CD4-positive, alpha-beta memory T cell (primary cell): ENCODE measurements at regions of chr11 and their contacts with region 1.

Region 1: DNA sequence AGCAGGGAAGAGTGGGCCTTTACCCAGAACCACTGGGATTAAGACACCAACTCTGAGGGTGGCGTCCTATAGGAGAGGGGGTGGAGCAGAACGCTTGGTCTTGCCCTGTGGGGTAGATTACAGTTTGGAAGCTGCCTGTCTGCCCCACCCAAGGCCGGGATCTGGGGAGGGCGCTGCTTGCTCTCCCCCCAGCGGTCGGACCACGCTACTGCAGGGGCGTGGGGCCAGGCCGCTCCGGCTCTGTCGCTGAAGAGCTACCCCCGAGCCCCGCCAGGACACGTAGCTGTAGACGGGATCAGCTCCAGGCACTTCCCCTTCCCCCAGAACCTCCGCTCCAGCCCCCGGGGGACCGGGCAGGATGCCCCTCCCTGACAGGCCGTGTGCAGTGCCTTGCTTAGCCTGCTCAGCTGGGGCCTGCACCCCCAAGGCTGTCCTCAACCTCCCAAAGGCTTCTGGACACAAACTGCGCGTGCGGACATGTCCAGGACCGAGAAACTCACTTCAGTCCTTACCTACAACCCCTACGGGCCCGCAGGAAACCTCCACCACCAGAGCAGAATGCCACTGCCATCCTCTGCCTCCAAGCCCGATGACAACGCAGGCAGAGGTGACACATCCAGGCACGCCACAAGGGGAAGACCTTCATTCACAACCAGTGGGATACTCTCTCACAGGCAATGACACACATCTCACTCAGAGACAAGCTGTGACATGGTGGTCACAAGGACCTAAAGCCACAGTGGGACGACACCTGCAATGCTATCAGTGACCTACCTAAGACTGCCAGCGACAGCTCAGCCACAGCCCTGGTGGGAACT is 3.6 kb downstream of the AHNAK start:
- DNase-seq: peak; percentile 71 to 92 (median 71)
- H3K4me3 ChIP-seq: peak overlapping the region; percentile 91 to 94
- H3K4me3 Mint-ChIP-seq: peak overlapping the region; percentile 97 to 99 (median 98)
- H3K27ac ChIP-seq: peak overlapping the region; percentile 97
- H3K27ac Mint-ChIP-seq: peak overlapping the region; percentile 94 to 99 (median 98)
- H3K4me1 ChIP-seq: peaks cover 77% of the 10 kb centered on the region
- H3K4me1 Mint-ChIP-seq: peaks cover 48 to 88% (median 63%) of the 10 kb centered on the region in 4 donors
- H3K27me3 ChIP-seq: no peaks in the 10 kb centered on the region
- H3K27me3 Mint-ChIP-seq: no peaks in the 10 kb centered on the region

Region 2: GRCh38 chr11:62372871-62373270 is 170.1 kb before region 1 on chr11:
- CTCF ChIA-PET with region 1: no interaction called
- POLR2A ChIA-PET with region 1: no interaction called
- intact Hi-C with region 1: no loop called
- DNase-seq: no peak
- H3K4me3 ChIP-seq: no peak overlapping the region
- H3K4me3 Mint-ChIP-seq: no peak overlapping the region
- H3K27ac ChIP-seq: no peak overlapping the region
- H3K27ac Mint-ChIP-seq: peak overlapping the region in 2 of 7 donors; percentile 16 to 21
- H3K4me1 ChIP-seq: peaks cover 4% of the 10 kb centered on the region
- H3K4me1 Mint-ChIP-seq: peaks cover 0 to 37% (median 13%) of the 10 kb centered on the region in 4 donors
- H3K27me3 ChIP-seq: no peaks in the 10 kb centered on the region
- H3K27me3 Mint-ChIP-seq: no peaks in the 10 kb centered on the region

Region 3: DNA sequence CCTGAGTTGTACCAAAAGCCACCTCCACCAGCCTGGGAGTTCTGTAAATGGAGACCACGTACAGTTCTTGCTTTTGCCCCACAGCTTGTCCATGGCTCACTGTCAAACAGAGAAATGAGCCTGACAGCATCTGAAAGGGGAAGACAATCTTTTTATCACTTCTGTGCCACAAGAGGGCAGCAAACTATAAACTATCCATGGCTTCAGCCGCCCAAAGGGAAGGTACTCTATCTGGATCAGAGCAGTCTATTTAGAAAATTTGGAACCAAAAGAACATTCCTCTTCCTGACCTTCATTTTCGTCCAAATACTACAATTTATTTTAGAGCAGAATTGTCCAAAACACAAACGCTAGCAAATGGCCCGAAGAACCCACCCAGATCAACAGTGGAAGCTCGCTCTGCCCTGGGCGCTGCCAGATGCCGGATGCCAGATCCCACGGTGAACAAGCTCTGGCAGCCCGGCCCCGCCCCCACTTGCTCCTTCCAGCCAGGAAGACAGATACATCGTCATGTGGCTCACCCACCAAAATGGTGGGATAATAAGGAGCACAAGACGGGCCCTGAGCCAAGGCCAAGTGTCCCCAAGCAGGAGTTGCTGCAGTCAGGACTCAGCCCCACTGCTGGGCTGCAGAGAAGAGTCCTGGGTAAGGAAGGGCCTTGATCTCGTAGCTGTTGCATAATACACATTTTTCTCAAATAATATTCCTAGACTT is 148.0 kb before region 1 on chr11:
- CTCF ChIA-PET with region 1: interaction called, 35 read pairs
- POLR2A ChIA-PET with region 1: interaction called, 3 read pairs
- intact Hi-C with region 1: loop called (anchors 1 kb)
- DNase-seq: peak; percentile 56 to 63 (median 59)
- H3K4me3 ChIP-seq: no peak overlapping the region
- H3K4me3 Mint-ChIP-seq: no peak overlapping the region
- H3K27ac ChIP-seq: no peak overlapping the region
- H3K27ac Mint-ChIP-seq: peak overlapping the region in 4 of 7 donors; percentile 58 to 68 (median 60)
- H3K4me1 ChIP-seq: peaks cover 24% of the 10 kb centered on the region
- H3K4me1 Mint-ChIP-seq: peaks cover 8 to 12% (median 10%) of the 10 kb centered on the region in 4 donors
- H3K27me3 ChIP-seq: no peaks in the 10 kb centered on the region
- H3K27me3 Mint-ChIP-seq: no peaks in the 10 kb centered on the region

Region 4: DNA sequence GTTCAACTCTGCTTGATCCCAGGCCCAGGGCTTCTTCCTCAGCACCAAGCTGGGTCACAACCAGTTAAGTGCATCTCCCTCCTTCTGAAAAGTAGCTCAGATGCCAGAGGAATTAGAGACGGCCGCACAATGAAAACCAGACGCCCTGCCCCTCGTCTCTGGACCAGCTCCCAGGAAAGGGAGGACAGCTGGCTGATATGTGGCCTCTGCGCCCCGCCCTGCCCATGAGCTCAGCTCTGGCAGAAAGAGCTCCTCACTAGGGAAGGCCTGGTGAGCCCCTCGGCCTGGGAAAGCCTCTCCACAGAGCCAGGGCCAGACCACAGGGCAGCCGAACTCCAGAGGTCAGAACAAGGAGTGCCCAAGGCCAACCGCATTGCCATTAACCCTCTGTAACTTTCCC is 142.2 kb before region 1 on chr11:
- CTCF ChIA-PET with region 1: interaction called, 35 read pairs
- POLR2A ChIA-PET with region 1: interaction called, 6 read pairs
- intact Hi-C with region 1: no loop called
- DNase-seq: no peak
- H3K4me3 ChIP-seq: no peak overlapping the region
- H3K4me3 Mint-ChIP-seq: peak overlapping the region in 2 of 8 donors; percentile 10 to 23
- H3K27ac ChIP-seq: no peak overlapping the region
- H3K27ac Mint-ChIP-seq: peak overlapping the region in 1 of 7 donors; percentile 37
- H3K4me1 ChIP-seq: peaks cover 44% of the 10 kb centered on the region
- H3K4me1 Mint-ChIP-seq: peaks cover 22 to 33% (median 27%) of the 10 kb centered on the region in 4 donors
- H3K27me3 ChIP-seq: no peaks in the 10 kb centered on the region
- H3K27me3 Mint-ChIP-seq: peaks cover 0 to 1% of the 10 kb centered on the region in 2 donors

Region 5: DNA sequence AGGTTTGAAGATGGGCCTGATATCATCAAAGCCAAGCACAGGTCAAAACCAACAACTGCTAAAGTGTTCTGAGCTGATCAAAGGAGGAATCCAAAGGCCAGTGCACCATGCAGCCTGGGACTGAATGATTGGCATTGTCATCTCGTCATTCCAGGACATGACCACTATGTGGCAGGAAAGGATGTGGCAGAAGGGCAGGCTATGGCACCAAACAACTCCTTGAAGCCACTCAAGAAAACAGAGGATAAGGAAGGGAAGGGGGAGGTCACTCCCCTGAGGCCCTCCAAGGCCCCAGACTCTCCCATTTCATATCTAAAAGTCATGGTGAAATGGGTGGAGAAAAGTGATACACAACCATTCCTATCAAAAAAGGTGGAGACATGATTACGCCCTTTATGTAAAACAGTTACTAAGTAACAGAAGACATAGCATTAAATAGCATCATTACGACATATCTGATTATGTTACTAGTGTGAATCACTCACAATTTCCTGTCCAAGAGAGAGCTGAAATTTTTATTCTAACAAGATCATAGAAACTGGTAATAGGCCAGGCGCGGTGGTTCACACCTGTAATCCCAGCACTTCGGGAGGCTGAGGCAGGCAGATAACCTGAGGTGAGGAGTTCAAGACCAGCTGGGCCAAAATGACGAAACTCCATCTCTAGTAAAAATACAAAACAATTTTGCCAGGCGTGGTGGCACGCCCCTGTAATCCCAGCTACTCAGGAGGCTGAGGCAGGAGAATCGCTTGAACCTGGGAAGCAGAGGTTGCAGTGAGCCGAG is 45.6 kb before region 1 on chr11:
- CTCF ChIA-PET with region 1: interaction called, 6 read pairs
- POLR2A ChIA-PET with region 1: interaction called, 3 read pairs
- intact Hi-C with region 1: loop called (anchors 1 kb)
- DNase-seq: peak in 1 of 5 donors; percentile 16
- H3K4me3 ChIP-seq: no peak overlapping the region
- H3K4me3 Mint-ChIP-seq: no peak overlapping the region
- H3K27ac ChIP-seq: no peak overlapping the region
- H3K27ac Mint-ChIP-seq: peak overlapping the region in 2 of 7 donors; percentile 43 to 54
- H3K4me1 ChIP-seq: no peaks in the 10 kb centered on the region
- H3K4me1 Mint-ChIP-seq: peaks cover 2 to 15% (median 7%) of the 10 kb centered on the region in 4 donors
- H3K27me3 ChIP-seq: no peaks in the 10 kb centered on the region
- H3K27me3 Mint-ChIP-seq: no peaks in the 10 kb centered on the region

Region 6: DNA sequence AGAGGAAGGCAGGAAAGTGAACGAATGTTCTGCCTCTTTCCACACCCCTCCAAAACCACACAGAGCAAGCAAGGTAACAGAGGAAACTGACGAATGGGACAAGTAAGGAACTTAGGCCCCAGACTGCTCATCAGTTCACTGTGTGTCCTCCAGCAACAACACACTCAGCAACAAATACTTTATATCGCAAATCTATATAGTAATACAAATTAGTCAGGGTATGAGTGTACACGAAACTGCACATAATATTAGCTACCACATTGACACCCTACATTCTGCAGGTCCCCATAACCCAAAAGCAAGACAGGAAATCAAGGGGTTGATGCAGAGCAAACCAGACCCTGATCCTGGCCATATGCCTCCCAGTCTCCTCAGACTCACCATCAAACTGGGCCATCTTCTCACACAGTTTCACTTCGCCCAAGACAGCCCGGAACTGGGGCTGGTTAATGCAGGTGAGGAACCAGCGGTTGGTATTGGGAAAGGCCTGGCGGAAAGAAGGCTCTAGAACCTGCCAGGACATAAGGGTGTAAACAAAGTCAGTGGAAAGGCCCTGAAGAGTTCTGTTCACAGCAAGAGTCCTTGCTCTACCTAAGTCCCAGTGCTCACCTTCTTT is 24.2 kb after region 1 on chr11:
- CTCF ChIA-PET with region 1: interaction called, 450 read pairs
- POLR2A ChIA-PET with region 1: interaction called, 751 read pairs
- intact Hi-C with region 1: no loop called
- DNase-seq: no peak
- H3K4me3 ChIP-seq: no peak overlapping the region
- H3K4me3 Mint-ChIP-seq: peak overlapping the region in 2 of 8 donors; percentile 28 to 73
- H3K27ac ChIP-seq: peak overlapping the region; percentile 15
- H3K27ac Mint-ChIP-seq: peak overlapping the region; percentile 51 to 85 (median 81)
- H3K4me1 ChIP-seq: peaks cover 38% of the 10 kb centered on the region
- H3K4me1 Mint-ChIP-seq: peaks cover 25 to 51% (median 38%) of the 10 kb centered on the region in 4 donors
- H3K27me3 ChIP-seq: no peaks in the 10 kb centered on the region
- H3K27me3 Mint-ChIP-seq: no peaks in the 10 kb centered on the region

Region 7: DNA sequence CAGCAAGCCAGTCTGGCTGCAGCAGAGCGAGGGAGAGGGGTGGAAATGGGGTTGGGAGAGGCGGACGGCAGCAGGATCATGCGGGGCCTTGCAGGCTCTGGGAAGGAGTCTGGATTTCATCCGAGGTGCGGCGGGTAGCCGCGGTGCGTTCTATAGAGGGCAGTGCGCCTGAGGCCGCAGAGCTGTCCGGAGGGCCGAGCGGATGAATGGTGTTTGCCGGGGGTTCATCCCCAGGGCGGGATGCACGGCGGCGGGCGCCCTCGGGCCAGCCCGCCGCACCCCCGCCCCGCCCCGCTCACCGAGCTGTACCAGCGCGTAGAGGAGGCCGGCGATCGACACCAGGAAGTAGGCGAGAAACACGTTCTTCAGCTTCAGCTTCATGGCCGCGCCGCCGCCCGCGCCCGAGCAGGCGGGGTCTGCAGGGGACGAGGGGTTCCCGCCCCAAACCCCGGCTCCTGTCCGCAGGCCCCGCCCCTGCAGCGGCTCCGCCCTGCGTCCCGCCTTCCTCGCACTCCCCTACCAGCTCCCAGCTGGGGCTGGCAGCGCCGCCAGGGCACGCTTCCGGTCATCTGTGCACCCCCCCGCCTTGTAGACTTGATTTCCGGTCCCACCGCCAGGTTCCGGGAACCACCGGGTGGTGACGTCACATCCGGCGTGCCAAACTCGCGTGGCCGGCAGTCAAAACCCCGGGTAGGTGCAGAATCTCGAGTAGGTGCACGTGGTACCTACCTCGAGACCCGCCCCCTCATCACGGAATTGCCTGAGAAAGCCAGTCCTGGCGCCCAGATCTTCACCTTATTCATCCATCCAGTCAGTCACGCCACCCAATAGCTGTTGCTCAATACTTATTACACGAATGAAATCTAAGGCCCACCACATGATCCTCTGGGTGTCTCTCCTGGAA is 78.9 kb after region 1 on chr11 and contains the start of gene B3GAT3:
- CTCF ChIA-PET with region 1: no interaction called
- POLR2A ChIA-PET with region 1: no interaction called
- intact Hi-C with region 1: no loop called
- DNase-seq: peak; percentile 95 to 99 (median 96)
- H3K4me3 ChIP-seq: peak within 1 kb of the TSS; percentile 83 to 89
- H3K4me3 Mint-ChIP-seq: peak within 1 kb of the TSS; percentile 89 to 98 (median 95)
- H3K27ac ChIP-seq: peak within 1 kb of the TSS; percentile 94
- H3K27ac Mint-ChIP-seq: peak within 1 kb of the TSS; percentile 91 to 99 (median 98)
- H3K4me1 ChIP-seq: peaks cover 26% of the 10 kb centered on the region
- H3K4me1 Mint-ChIP-seq: peaks cover 19 to 29% (median 20%) of the 10 kb centered on the region in 4 donors
- H3K27me3 ChIP-seq: no peaks in the 10 kb centered on the region
- H3K27me3 Mint-ChIP-seq: no peaks in the 10 kb centered on the region
- total RNA-seq, gene B3GAT3: 66.3 to 74.3 TPM